ENCODE measurements at regions of chr1 and their contacts with region 1.

Region 1: GRCh38 chr1:26417111-26417759 is 6.6 kb downstream of the LIN28A start:
- DNase-seq: peak; percentile 87
- H3K4me3 Mint-ChIP-seq: no peak overlapping the region
- H3K27ac Mint-ChIP-seq: no peak overlapping the region
- H3K4me1 Mint-ChIP-seq: peaks cover 3% of the 10 kb centered on the region
- H3K27me3 Mint-ChIP-seq: peaks cover 60% of the 10 kb centered on the region

Region 2: DNA sequence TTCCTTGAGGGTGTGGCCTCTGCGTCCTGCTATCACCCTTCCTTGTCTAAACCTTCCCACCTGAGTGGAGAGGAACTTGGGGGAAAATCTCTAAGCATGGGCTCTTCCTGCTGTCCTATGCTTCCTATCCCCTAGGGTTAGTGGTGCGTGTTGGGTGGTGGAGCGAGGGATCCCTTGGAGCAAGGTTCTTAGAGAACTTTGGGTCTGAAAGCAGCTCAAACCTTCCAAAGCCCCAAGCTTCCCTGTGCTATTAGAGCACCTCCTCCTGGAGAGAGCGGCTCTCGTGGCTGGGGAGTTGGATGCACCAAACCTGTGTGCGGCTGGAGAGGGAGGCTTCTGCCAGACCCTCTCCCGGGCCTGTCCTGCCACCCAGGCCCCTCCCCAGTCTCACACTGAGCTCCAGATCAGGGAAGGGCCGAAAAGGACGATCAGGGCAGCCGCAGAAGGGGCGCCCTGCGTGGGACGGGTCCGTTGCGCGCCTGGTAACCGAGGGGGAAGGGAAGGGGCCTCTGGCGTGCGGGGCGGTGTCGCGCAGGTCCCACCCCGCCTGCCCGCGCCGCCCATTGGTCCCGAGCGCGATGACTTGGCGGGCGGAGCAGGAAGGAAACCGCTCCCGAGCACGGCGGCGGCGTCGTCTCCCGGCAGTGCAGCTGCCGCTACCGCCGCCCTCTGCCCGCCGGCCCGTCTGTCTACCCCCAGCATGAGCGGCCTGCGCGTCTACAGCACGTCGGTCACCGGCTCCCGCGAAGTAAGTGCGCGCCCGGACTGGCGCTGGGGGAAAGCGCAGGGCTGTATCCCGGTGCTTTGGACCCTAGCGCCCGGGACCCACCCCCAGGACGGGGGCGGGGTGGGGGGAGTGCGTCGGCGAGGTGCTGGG is 137.5 kb before region 1 on chr1 and contains the start of gene SH3BGRL3:
- CTCF ChIA-PET with region 1: interaction called, 66 read pairs
- POLR2A ChIA-PET with region 1: interaction called, 6 read pairs
- DNase-seq: peak; percentile 90
- H3K4me3 Mint-ChIP-seq: peak within 1 kb of the TSS; percentile 81
- H3K27ac Mint-ChIP-seq: peak within 1 kb of the TSS; percentile 98
- H3K4me1 Mint-ChIP-seq: peaks cover 87% of the 10 kb centered on the region
- H3K27me3 Mint-ChIP-seq: no peaks in the 10 kb centered on the region
- total RNA-seq, gene SH3BGRL3: 662 to 665 TPM

Region 3: DNA sequence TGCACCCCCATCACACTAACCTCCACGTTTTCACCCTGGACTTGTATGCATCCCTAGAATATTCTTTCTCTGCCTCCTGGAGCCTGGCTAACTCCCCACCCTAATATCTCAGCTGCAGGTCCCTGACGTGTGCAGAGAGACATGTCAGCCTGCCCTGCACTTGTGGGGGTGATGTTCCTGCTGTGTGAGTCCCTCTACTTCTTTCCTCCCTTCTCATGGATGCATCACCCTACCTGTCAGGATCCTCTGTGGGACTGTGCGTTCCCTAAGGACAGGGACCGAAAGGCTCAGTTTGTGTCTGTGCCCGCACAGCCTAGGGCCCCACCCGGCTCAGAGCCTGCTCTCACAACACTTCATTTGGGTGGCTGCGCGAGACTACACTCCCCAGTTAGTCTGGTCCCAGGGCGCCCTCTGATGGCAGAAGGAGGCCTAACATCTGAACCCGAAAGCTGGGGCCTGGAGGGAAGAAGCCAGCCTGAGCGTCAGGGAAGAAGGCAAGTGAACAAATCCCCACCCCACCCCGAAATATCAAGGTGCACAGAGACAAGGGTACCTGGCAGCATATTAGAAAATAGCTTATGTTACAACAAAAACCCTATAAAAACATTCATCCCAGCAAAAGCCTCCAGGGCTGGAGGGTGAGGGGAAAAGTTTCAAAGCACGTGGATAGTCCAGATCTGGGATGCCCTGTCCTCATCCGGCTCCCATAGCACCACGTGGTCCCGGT is 95.8 kb before region 1 on chr1:
- CTCF ChIA-PET with region 1: interaction called, 27 read pairs
- POLR2A ChIA-PET with region 1: interaction called, 3 read pairs
- DNase-seq: peak; percentile 95
- H3K4me3 Mint-ChIP-seq: peak overlapping the region; percentile 84
- H3K27ac Mint-ChIP-seq: peak overlapping the region; percentile 97
- H3K4me1 Mint-ChIP-seq: peaks cover 51% of the 10 kb centered on the region
- H3K27me3 Mint-ChIP-seq: no peaks in the 10 kb centered on the region

Region 4: DNA sequence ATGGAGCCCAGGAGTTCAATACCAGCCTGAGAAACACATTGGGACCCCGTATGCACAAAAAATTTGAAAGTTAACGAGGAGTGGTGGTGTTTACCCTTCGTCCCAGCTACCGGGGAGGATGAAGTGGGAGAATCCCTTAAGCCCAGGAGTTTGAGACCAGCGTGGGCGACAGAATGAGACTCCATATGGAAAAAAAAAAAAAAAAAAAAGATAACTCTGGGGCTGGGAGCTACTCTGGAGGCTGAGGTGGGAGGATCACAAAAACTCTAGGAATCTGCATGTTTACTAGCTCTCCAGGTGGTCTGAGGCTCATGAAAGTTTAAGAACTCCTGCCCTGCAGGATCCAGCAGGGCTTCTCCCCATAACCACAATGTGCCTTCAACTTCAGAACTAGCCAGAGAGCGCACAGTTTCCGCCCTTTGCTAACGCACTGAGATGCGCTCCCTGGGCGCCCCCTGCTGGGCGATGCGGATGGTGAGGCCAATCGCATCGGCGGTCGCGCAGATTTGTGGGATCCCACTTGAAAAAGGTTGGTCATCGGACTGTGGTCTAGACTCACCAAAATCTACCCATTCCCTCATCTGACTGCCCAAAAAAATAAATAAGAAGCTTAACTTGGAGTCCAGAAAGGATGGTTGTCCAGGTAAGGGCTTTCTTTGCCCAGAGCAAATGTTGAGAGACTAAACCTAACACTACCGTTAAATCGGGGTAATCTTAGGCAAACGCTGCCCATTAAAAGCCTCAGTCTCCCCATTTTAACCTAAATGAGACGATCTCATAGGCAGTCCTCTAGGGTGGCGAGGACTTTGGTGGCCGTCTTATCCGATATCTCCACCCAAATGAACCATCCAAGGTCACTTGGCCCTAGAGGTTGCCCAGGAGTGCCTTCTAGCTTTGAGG is 53.4 kb before region 1 on chr1:
- CTCF ChIA-PET with region 1: interaction called, 27 read pairs
- POLR2A ChIA-PET with region 1: no interaction called
- DNase-seq: peak; percentile 88
- H3K4me3 Mint-ChIP-seq: no peak overlapping the region
- H3K27ac Mint-ChIP-seq: no peak overlapping the region
- H3K4me1 Mint-ChIP-seq: peaks cover 49% of the 10 kb centered on the region
- H3K27me3 Mint-ChIP-seq: peaks cover 23% of the 10 kb centered on the region

Region 5: GRCh38 chr1:26378088-26378878 is 39.0 kb before region 1 on chr1:
- CTCF ChIA-PET with region 1: interaction called, 17 read pairs
- POLR2A ChIA-PET with region 1: no interaction called
- DNase-seq: peak; percentile 89
- H3K4me3 Mint-ChIP-seq: peak overlapping the region; percentile 52
- H3K27ac Mint-ChIP-seq: peak overlapping the region; percentile 91
- H3K4me1 Mint-ChIP-seq: peaks cover 75% of the 10 kb centered on the region
- H3K27me3 Mint-ChIP-seq: no peaks in the 10 kb centered on the region

Region 6: DNA sequence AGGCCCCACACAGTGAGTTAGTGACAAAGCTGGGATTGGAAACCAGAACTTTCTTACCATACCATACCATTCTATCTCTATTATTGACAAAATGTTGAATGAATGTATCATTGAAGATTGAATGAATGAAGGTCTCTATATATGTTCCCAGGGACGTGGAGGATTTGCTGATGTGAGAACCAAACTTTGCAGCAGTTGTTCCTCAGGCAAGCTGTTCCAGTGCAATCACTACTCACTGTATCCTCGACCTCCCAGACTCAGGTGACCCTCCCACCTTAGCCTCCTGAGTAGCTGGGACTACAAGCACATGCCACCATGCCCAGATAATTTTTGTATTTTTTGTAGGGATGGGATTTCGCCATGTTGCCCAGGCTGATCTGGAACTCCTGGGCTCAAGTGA is 18.2 kb before region 1 on chr1:
- CTCF ChIA-PET with region 1: interaction called, 44 read pairs
- POLR2A ChIA-PET with region 1: no interaction called
- DNase-seq: no peak
- H3K4me3 Mint-ChIP-seq: no peak overlapping the region
- H3K27ac Mint-ChIP-seq: no peak overlapping the region
- H3K4me1 Mint-ChIP-seq: peaks cover 4% of the 10 kb centered on the region
- H3K27me3 Mint-ChIP-seq: peaks cover 19% of the 10 kb centered on the region

Region 7: DNA sequence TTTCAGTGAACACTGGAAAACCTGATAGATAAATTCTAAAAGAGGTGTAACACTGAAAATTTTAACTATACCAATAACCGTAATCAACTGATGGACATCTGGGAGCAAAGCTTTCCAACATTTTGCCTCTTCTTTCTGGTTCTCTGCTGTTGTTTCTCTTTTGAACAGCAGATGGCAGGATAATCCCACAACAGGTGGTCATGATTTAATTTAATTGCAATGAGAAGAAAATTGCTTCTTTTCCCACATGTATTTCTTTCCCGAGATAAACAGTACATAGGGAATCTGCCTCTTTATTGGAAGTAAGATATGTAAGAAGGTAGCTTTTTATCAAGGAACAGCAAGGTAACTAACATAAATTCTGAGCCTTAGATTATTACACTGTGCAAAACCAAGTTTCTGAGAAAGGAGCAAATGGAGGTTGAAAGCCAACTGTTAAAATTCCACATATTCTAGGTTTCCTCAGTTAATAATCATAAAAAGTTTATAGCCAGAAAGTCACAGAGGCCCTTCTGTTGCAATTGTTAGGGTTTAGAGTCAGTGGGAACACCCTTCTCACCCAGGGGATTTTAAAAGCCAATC is 185.2 kb after region 1 on chr1:
- CTCF ChIA-PET with region 1: no interaction called
- POLR2A ChIA-PET with region 1: no interaction called
- DNase-seq: peak; percentile 38
- H3K4me3 Mint-ChIP-seq: no peak overlapping the region
- H3K27ac Mint-ChIP-seq: no peak overlapping the region
- H3K4me1 Mint-ChIP-seq: peaks cover 11% of the 10 kb centered on the region
- H3K27me3 Mint-ChIP-seq: peaks cover 20% of the 10 kb centered on the region

Measured in activated CD4-positive, alpha-beta memory T cell treated with anti-CD3 and anti-CD28 coated beads, Interleukin-2, amount 10 ng/mL, durations not matched to agents 7 days and 5 days (primary cell).